Left colon (tissue), 2 donors: ENCODE measurements at regions of chr4 and their contacts with region 1.

Region 1: DNA sequence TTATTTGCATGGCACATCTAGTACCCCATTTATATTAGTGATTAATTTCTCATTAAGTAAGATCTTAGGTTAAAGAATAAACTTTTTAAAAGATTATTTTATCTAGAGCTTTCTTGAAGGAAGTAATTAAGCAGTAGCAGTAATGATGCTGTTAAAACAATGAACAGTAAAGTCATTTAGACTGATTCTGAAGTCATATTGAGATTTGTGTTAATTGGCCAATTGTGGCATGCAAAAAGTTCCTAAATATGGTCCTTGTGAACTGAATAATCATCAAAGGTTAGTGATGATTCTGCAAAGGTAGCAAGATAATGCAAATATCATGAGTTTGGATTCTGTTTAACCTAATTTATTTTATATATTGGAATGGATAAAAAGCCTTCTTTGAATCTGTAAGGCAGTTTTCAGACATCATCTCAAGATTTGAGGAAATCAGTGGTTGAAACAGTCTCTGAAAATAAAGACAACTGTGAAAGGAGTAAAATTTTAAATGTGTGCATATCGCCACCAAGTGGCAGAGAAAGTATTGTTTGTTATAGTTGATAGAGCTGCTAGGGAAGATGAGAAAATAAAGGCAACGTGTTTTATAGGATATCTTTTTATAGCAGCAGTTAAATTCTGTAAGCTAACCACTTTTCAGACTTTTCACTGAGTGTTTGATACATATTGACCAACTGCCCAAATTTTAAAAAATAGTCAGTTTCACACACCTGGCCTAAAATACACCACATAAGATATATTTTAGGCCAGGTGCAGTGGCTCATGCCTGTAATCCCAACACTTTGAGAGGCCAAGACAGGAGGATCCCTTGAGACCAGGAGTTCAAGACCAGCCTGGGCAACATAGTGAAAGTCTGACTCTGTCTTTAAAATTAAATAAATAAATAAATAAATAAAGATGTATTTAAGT is 79.6 kb downstream of the CCKAR start:
- DNase-seq: no peak
- ATAC-seq: peak; percentile 78

Region 2: DNA sequence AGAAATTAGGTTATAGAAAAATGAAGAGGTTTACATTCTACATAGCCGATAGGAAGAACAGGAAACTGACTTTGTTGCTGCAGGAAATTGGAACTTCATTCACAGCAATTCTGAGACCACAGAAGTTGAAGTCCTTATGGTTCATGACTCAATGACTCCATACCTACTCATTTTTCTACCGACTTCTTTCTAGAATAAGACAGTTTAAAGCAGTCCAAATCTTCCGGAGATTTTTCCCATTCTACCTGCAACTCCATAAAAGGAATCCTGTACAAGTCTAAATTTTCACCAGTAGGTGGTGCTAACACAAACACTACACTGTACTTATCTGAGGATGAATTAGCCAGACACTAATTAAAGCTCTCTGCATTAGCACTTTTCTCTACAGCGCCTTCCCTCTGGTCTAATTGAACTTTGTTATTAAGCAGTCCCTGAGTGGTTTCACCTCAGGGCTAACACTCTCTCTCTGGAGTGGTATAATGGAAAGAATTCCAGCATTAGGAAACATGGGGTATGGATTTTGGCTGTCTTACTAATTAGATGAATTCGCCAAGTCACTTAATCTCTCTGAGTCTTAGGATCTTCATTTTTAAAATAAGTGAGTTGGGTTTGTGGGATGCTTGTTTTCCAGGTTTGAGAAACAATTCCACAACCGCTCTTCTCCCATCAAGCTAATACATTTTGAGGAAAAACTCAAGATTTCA is 328.7 kb before region 1 on chr4:
- intact Hi-C with region 1: loop called in 1 of 2 experiments (anchors 10 kb)
- DNase-seq: no peak
- ATAC-seq: peak; percentile 85

Region 3: DNA sequence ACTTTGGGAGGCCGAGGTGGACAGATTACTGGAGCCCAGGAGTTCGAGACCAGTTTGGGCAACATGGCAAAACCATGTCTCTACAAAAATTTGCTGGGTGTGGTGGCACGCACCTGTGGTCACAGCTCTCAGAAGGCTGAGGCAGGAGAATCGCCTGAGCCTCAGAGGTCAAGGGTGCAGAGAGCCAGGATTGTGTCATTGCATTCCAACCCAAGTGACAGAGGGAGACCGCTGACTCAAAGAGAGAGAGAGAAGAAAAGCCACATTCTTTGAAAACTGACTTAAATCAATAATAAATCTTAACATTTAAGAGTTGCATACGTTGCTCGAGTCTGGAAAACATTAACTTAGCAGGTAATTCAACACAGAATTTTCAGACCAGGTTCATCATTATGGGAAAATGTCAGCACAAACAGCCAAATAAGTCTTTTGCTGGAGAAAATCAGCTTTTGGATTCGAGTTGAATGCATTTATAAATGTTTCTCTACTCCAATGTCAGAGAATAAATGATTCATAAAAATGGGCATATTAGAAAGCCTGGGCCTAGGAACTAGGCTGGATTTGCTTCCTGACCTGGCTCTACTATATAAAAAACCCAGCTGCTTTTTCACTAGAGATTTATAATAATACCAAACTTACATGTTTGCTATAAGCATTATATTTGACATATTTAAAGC is 158.2 kb before region 1 on chr4:
- intact Hi-C with region 1: no loop called
- DNase-seq: no peak
- ATAC-seq: no peak

Region 4: DNA sequence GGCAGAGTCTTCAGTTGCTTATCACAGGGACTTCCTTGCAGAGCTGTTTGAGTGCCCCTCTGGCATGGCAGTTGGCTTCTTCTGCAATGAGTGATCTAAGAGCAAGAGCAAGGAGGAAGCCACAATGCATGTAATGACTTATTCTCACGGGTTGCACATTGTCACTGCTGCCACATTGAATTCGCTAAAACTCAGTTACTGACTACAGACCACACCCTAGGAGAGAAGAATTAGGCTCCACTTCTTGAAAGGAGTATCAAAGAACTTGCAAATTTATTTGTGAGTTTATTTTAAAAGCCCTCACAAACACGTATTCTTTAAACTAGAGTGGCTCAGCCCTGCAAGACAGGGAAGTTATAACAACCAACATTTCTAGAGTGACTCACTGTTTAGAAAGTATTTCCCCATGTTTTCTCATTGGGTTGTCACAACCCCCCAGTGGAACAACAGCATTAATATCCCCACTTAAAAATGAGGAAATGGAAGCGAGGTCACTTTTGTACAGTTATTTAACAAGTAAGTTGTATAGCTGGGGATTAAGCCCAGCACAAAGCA is 122.2 kb before region 1 on chr4:
- intact Hi-C with region 1: no loop called
- DNase-seq: no peak
- ATAC-seq: no peak

Region 5: DNA sequence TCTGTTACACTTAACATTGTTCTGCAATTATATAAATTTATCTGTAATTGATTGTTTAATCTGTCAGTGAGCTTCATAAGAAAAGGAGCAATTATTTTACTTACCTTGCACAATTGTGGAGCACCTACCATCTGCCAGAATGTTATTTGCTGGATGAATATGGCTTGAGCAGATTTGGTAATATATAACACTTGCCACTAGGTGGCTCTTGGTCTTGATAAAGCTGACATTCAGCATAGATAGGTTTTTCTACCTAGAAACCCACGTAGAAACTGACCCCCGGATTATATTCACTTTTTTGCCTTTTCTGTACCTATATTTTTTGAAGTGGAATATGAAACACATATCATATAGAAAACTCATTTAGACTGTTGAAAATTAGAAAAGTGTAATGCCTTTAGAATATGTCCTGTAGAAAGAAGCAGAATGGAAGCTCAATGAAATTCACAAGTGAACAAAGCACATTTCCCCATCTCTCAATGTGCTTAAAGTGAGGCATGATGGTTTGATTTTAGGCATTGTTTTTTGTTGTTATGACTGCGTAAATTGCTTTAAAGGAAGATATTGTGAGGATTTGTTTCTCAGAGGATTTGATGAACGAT is 80.4 kb before region 1 on chr4:
- intact Hi-C with region 1: loop called in 1 of 2 experiments (anchors 5 kb)
- DNase-seq: no peak
- ATAC-seq: peak; percentile 77

Region 6: GRCh38 chr4:27096142-27096824 is 685.6 kb after region 1 on chr4:
- intact Hi-C with region 1: no loop called
- DNase-seq: no peak
- ATAC-seq: no peak